ENCODE measurements at regions of chr14 and their contacts with region 1.

Region 1: GRCh38 chr14:91021991-91022621 is 38.3 kb downstream of the RPS6KA5 start:
- DNase-seq: peak in 2 of 9 donors; percentile 13 to 49
- ATAC-seq: peak; percentile 48
- H3K4me3 ChIP-seq: peak overlapping the region; percentile 56
- H3K4me3 Mint-ChIP-seq: peak overlapping the region; percentile 73 to 92 (median 84)
- H3K27ac ChIP-seq: peak overlapping the region; percentile 73
- H3K27ac Mint-ChIP-seq: peak overlapping the region; percentile 88 to 99 (median 92)
- H3K4me1 ChIP-seq: peaks cover 7 to 12% of the 10 kb centered on the region in 2 donors
- H3K4me1 Mint-ChIP-seq: peaks cover 21 to 79% (median 74%) of the 10 kb centered on the region in 7 donors
- H3K27me3 ChIP-seq: no peaks in the 10 kb centered on the region
- H3K27me3 Mint-ChIP-seq: no peaks in the 10 kb centered on the region

Region 2: DNA sequence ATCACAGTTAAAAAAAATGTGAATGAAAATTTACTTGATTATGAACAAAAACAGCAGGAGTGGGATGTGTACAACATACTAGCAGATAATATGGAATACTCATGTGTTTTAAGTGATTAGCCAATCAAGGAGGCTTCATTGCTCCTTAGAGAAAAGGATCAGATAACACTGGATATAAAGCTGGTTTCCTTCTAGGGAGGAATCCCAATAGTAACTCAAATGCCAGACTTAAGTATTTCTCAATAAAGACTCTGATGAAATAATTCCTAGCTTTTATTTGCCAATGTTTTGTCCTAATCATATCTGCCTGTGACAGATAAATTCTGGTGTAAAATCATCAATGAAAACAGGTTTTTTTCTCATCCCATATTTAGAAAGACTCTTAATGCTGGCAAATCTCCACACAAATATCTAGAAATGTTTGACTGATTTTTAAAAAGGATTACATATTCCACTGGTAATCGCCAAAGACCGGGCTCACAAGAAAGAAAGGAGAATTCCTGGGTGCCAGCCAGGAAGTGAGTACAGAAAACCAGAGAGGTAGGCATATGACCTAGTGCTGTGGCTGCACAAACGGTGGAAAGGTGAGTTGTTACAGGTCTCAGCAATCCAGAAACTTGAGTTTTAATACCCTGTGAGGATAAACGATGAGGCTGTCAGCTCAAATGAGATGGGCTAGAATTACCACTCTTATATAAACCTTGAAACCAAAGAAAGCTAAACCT is 97.3 kb before region 1 on chr14:
- CTCF ChIA-PET with region 1: no interaction called
- POLR2A ChIA-PET with region 1: no interaction called
- intact Hi-C with region 1: loop called in 1 of 2 experiments (anchors 10 kb)
- DNase-seq: no peak
- ATAC-seq: no peak
- H3K4me3 ChIP-seq: no peak overlapping the region
- H3K4me3 Mint-ChIP-seq: no peak overlapping the region
- H3K27ac ChIP-seq: no peak overlapping the region
- H3K27ac Mint-ChIP-seq: no peak overlapping the region
- H3K4me1 ChIP-seq: no peaks in the 10 kb centered on the region
- H3K4me1 Mint-ChIP-seq: peaks cover 0 to 5% (median 0%) of the 10 kb centered on the region in 7 donors
- H3K27me3 ChIP-seq: no peaks in the 10 kb centered on the region
- H3K27me3 Mint-ChIP-seq: no peaks in the 10 kb centered on the region

Region 3: GRCh38 chr14:90969531-90970166 is 52.5 kb before region 1 on chr14:
- CTCF ChIA-PET with region 1: interaction called, 5 read pairs
- POLR2A ChIA-PET with region 1: no interaction called
- intact Hi-C with region 1: loop called in 1 of 2 experiments (anchors 5 kb)
- DNase-seq: no peak
- ATAC-seq: peak; percentile 34
- H3K4me3 ChIP-seq: no peak overlapping the region
- H3K4me3 Mint-ChIP-seq: peak overlapping the region in 3 of 10 donors; percentile 0 to 78 (median 6)
- H3K27ac ChIP-seq: no peak overlapping the region
- H3K27ac Mint-ChIP-seq: peak overlapping the region in 3 of 9 donors; percentile 6 to 82 (median 76)
- H3K4me1 ChIP-seq: no peaks in the 10 kb centered on the region
- H3K4me1 Mint-ChIP-seq: peaks cover 7 to 49% (median 22%) of the 10 kb centered on the region in 7 donors
- H3K27me3 ChIP-seq: no peaks in the 10 kb centered on the region
- H3K27me3 Mint-ChIP-seq: no peaks in the 10 kb centered on the region

Region 4: GRCh38 chr14:90985601-90986242 is 36.4 kb before region 1 on chr14:
- CTCF ChIA-PET with region 1: no interaction called
- POLR2A ChIA-PET with region 1: no interaction called
- intact Hi-C with region 1: loop called in 1 of 2 experiments (anchors 5 kb)
- DNase-seq: peak in 1 of 9 donors; percentile 2
- ATAC-seq: no peak
- H3K4me3 ChIP-seq: no peak overlapping the region
- H3K4me3 Mint-ChIP-seq: no peak overlapping the region
- H3K27ac ChIP-seq: no peak overlapping the region
- H3K27ac Mint-ChIP-seq: no peak overlapping the region
- H3K4me1 ChIP-seq: no peaks in the 10 kb centered on the region
- H3K4me1 Mint-ChIP-seq: peaks cover 0 to 38% (median 9%) of the 10 kb centered on the region in 7 donors
- H3K27me3 ChIP-seq: no peaks in the 10 kb centered on the region
- H3K27me3 Mint-ChIP-seq: no peaks in the 10 kb centered on the region

Region 5: DNA sequence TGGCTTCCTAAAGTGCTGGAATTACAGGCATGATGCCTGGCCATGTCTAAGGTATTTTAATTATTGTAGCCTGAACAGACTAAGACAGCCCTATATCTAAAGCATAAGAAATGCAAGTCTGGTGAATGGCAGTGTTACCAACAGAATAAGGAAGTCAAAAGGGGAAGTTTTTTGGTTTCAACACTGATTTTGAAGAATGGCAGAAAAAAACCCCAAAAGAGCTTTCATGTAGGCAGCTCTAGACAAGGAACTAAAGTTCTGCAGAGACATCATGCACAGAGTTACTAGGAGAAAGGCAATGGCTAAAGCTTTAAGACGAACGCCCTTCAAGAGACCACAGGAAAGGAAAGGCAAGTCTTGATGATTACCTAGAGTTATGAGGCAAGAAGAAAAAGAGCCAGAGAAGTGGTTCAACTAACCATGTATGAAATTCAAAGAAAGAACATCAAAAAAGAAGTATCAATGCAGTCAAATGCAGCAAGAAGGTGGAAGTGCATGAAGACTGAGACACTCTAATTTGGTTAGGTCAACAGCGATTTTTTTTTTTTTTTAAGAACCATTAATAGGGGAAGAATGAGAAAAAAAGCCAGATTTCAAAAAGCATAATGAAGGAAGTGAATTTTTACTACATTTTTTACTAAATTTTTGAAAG is 12.5 kb before region 1 on chr14:
- CTCF ChIA-PET with region 1: interaction called, 4 read pairs
- POLR2A ChIA-PET with region 1: interaction called, 5 read pairs
- intact Hi-C with region 1: loop called (anchors 1 to 2 kb)
- DNase-seq: peak in 7 of 9 donors; percentile 17 to 60 (median 33)
- ATAC-seq: peak; percentile 86
- H3K4me3 ChIP-seq: no peak overlapping the region
- H3K4me3 Mint-ChIP-seq: peak overlapping the region in 9 of 10 donors; percentile 26 to 77 (median 62)
- H3K27ac ChIP-seq: no peak overlapping the region
- H3K27ac Mint-ChIP-seq: peak overlapping the region; percentile 29 to 81 (median 46)
- H3K4me1 ChIP-seq: peaks cover 0 to 28% of the 10 kb centered on the region in 2 donors
- H3K4me1 Mint-ChIP-seq: peaks cover 30 to 49% (median 44%) of the 10 kb centered on the region in 7 donors
- H3K27me3 ChIP-seq: no peaks in the 10 kb centered on the region
- H3K27me3 Mint-ChIP-seq: no peaks in the 10 kb centered on the region

Region 6: GRCh38 chr14:91078095-91078737 is 56.1 kb after region 1 on chr14:
- CTCF ChIA-PET with region 1: no interaction called
- POLR2A ChIA-PET with region 1: no interaction called
- intact Hi-C with region 1: loop called in 1 of 2 experiments (anchors 1 kb)
- DNase-seq: peak in 8 of 9 donors; percentile 52 to 88 (median 82)
- ATAC-seq: peak; percentile 98
- H3K4me3 ChIP-seq: no peak overlapping the region
- H3K4me3 Mint-ChIP-seq: peak overlapping the region; percentile 56 to 85 (median 72)
- H3K27ac ChIP-seq: no peak overlapping the region
- H3K27ac Mint-ChIP-seq: peak overlapping the region; percentile 32 to 92 (median 82)
- H3K4me1 ChIP-seq: peaks cover 10 to 17% of the 10 kb centered on the region in 2 donors
- H3K4me1 Mint-ChIP-seq: peaks cover 24 to 63% (median 37%) of the 10 kb centered on the region in 7 donors
- H3K27me3 ChIP-seq: no peaks in the 10 kb centered on the region
- H3K27me3 Mint-ChIP-seq: peaks cover 0 to 2% (median 0%) of the 10 kb centered on the region in 5 donors

Region 7: GRCh38 chr14:91103116-91103515 is 81.0 kb after region 1 on chr14:
- CTCF ChIA-PET with region 1: no interaction called
- POLR2A ChIA-PET with region 1: no interaction called
- intact Hi-C with region 1: no loop called
- DNase-seq: no peak
- ATAC-seq: no peak
- H3K4me3 ChIP-seq: no peak overlapping the region
- H3K4me3 Mint-ChIP-seq: no peak overlapping the region
- H3K27ac ChIP-seq: no peak overlapping the region
- H3K27ac Mint-ChIP-seq: peak overlapping the region in 1 of 9 donors; percentile 41
- H3K4me1 ChIP-seq: peaks cover 0 to 2% of the 10 kb centered on the region in 2 donors
- H3K4me1 Mint-ChIP-seq: peaks cover 5 to 10% (median 8%) of the 10 kb centered on the region in 7 donors
- H3K27me3 ChIP-seq: no peaks in the 10 kb centered on the region
- H3K27me3 Mint-ChIP-seq: peaks cover 0 to 10% (median 0%) of the 10 kb centered on the region in 5 donors